Activated CD4-positive, alpha-beta T cell treated with anti-CD3 and anti-CD28 coated beads for 36 hours (primary cell): ENCODE measurements at regions of chr13 and their contacts with region 1.

Region 1: GRCh38 chr13:95301183-95301967 is at the start of gene ABCC4:
- DNase-seq: peak; percentile 76
- ATAC-seq: peak; percentile 81
- H3K4me3 Mint-ChIP-seq: peak within 1 kb of the TSS; percentile 78
- H3K27ac Mint-ChIP-seq: peak within 1 kb of the TSS; percentile 66
- H3K4me1 Mint-ChIP-seq: peaks cover 43% of the 10 kb centered on the region
- H3K27me3 Mint-ChIP-seq: peaks cover 8% of the 10 kb centered on the region
- total RNA-seq, gene ABCC4: 9.0 to 9.5 TPM

Region 2: GRCh38 chr13:95191821-95192563 is 109.4 kb before region 1 on chr13:
- CTCF ChIA-PET with region 1: interaction called, 14 read pairs
- POLR2A ChIA-PET with region 1: no interaction called
- intact Hi-C with region 1: loop called (anchors 1 to 5 kb)
- DNase-seq: peak; percentile 85
- ATAC-seq: peak; percentile 91
- H3K4me3 Mint-ChIP-seq: no peak overlapping the region
- H3K27ac Mint-ChIP-seq: no peak overlapping the region
- H3K4me1 Mint-ChIP-seq: peaks cover 9% of the 10 kb centered on the region
- H3K27me3 Mint-ChIP-seq: no peaks in the 10 kb centered on the region

Region 3: GRCh38 chr13:95378603-95379002 is 77.2 kb after region 1 on chr13:
- CTCF ChIA-PET with region 1: interaction called, 14 read pairs
- POLR2A ChIA-PET with region 1: no interaction called
- intact Hi-C with region 1: loop called (anchors 1 to 2 kb)
- DNase-seq: no peak
- ATAC-seq: no peak
- H3K4me3 Mint-ChIP-seq: no peak overlapping the region
- H3K27ac Mint-ChIP-seq: no peak overlapping the region
- H3K4me1 Mint-ChIP-seq: no peaks in the 10 kb centered on the region
- H3K27me3 Mint-ChIP-seq: peaks cover 5% of the 10 kb centered on the region

Region 4: DNA sequence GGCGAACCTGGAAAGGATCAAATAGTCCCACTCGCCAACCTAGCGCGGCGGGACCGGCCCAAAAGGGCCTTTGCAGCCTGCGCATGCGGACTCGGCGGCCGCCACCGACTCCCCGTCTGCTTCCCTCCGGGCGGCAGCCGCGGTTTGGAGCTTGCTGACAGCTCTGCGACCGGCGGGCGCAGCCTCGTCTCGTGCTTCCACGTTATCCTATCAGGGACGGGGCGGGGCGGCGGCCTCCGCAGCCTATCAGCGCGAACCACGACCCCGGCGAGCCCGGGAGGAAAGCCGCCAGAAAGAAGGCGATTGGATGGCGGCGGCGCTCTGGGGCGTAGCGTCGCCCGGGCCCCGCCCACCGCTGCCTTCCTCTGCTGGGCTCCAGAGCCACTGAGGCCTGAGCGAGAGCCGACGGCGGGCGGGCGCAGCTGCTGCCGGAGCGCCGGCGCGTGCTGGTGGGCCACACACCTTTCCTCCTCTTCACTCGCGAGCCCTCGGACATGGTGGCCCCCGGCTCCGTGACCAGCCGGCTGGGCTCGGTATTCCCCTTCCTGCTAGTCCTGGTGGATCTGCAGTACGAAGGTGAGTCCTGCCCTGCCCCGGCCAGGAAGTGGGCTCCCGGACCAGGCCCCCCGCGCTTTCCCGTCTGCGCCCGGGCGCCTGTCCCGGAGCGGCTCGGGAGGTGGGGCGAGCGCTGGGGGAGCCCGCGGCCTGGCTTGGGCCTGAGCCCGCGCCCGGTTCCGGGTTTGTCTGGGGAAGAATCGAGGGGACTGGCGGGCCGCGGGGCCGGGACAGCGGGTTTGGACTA is 375.6 kb after region 1 on chr13 and contains the start of gene DNAJC3:
- CTCF ChIA-PET with region 1: interaction called, 3 read pairs
- POLR2A ChIA-PET with region 1: interaction called, 3 read pairs
- intact Hi-C with region 1: loop called (anchors 2 to 5 kb)
- DNase-seq: peak; percentile 99
- ATAC-seq: peak; percentile 96
- H3K4me3 Mint-ChIP-seq: peak within 1 kb of the TSS; percentile 96
- H3K27ac Mint-ChIP-seq: peak within 1 kb of the TSS; percentile 92
- H3K4me1 Mint-ChIP-seq: peaks cover 52% of the 10 kb centered on the region
- H3K27me3 Mint-ChIP-seq: no peaks in the 10 kb centered on the region
- total RNA-seq, gene DNAJC3: 13.4 to 16.3 TPM

Region 5: GRCh38 chr13:95781016-95781415 is 479.6 kb after region 1 on chr13:
- CTCF ChIA-PET with region 1: no interaction called
- POLR2A ChIA-PET with region 1: no interaction called
- intact Hi-C with region 1: no loop called
- DNase-seq: no peak
- ATAC-seq: no peak
- H3K4me3 Mint-ChIP-seq: no peak overlapping the region
- H3K27ac Mint-ChIP-seq: no peak overlapping the region
- H3K4me1 Mint-ChIP-seq: no peaks in the 10 kb centered on the region
- H3K27me3 Mint-ChIP-seq: no peaks in the 10 kb centered on the region